ENCODE measurements at regions of chr22 and their contacts with region 1.

Region 1: GRCh38 chr22:30005213-30005857 is 74.9 kb upstream of the HORMAD2 start:
- H3K4me3 Mint-ChIP-seq: no peak overlapping the region
- H3K27ac Mint-ChIP-seq: no peak overlapping the region
- H3K4me1 Mint-ChIP-seq: peaks cover 11% of the 10 kb centered on the region
- H3K27me3 Mint-ChIP-seq: no peaks in the 10 kb centered on the region

Region 2: GRCh38 chr22:29689880-29690213 is 315.5 kb before region 1 on chr22:
- intact Hi-C with region 1: loop called (anchors 10 kb)
- H3K4me3 Mint-ChIP-seq: no peak overlapping the region
- H3K27ac Mint-ChIP-seq: no peak overlapping the region
- H3K4me1 Mint-ChIP-seq: no peaks in the 10 kb centered on the region
- H3K27me3 Mint-ChIP-seq: no peaks in the 10 kb centered on the region

Region 3: DNA sequence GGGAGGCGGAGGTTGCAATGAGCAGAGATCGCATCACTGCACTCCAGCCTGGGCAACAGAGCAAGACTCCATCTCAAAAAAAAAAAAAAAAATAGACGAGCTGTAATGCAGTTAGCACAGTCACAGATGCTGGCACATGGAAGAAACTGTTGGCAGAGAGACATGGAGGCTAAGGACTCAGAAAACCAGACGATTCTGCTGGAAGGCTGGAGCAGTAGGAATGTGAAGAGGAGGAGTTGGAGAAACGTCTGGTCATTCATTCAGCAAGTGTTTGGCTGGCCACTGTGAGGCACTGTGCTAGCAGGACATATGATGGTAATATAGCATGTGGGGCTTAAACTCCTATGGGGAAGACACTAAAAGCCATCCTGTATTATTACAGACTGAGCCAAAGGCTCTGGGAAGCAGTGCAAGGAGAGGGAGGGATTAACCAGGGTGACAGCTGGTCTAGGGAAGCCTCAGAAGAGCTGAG is 233.1 kb before region 1 on chr22:
- intact Hi-C with region 1: loop called (anchors 5 kb)
- H3K4me3 Mint-ChIP-seq: no peak overlapping the region
- H3K27ac Mint-ChIP-seq: no peak overlapping the region
- H3K4me1 Mint-ChIP-seq: peaks cover 11% of the 10 kb centered on the region
- H3K27me3 Mint-ChIP-seq: no peaks in the 10 kb centered on the region